ENCODE measurements at regions of chr2 and their contacts with region 1.

Region 1: DNA sequence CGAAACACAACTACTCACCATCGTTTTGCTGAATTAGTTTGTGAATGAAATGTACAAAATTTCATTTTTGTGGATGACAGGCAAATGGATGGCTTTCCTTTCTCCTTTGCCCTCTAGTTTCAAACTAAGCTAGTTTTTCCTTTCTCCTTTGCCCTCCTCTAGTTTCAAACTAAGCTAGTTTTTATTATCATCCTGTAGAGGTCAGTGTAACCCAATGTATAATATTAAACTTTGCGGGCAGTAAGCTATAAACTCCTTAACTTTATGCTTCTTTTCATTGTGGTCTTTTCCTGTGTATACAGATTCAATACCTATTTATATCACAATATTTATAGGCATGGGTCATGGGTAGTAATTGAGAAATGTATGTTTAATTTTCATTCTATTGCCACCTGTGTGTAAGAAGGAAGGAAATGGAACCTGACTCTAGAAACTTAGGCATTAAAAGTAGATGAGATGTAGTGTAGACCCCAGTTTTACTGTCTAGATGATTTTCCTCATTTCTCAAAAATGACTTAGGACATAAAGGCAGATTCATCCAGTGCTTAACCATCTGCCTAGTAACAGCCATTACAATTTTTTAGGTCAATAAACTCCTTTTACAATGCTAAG is 58.1 kb downstream of the MAP3K19 start:
- DNase-seq: peak in 3 of 14 experiments; percentile 31 to 44 (median 41)
- ATAC-seq: no peak
- H3K4me3 ChIP-seq: no peak overlapping the region
- H3K4me3 Mint-ChIP-seq: no peak overlapping the region
- H3K27ac ChIP-seq: no peak overlapping the region
- H3K27ac Mint-ChIP-seq: no peak overlapping the region
- H3K4me1 ChIP-seq: no peaks in the 10 kb centered on the region
- H3K4me1 Mint-ChIP-seq: no peaks in the 10 kb centered on the region
- H3K27me3 ChIP-seq: no peaks in the 10 kb centered on the region
- H3K27me3 Mint-ChIP-seq: peaks cover 6% of the 10 kb centered on the region
- CTCF ChIP-seq: peak; percentile 46

Region 2: DNA sequence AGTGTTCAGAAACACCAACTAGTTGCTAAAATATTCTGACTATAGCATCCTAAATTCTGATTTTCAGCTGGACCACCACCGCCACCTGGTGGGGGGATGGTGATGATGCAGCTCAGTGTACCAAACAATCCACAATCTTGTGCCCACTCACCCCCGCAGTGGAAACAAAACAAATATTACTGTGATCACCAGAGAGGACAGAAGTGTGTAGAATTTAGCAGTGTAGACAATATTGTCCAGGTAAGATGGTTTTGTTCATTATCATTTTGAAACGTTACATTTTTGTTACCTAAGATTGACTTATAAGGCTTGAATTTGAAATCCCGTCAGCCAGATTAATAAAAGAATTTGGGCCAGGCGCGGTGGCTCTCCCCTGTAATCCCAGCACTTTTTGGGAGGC is 720.9 kb after region 1 on chr2:
- CTCF ChIA-PET with region 1: interaction called, 17 read pairs
- POLR2A ChIA-PET with region 1: interaction called, 4 read pairs
- intact Hi-C with region 1: loop called (anchors 1 to 5 kb)
- DNase-seq: peak; percentile 46 to 82 (median 68)
- ATAC-seq: peak; percentile 87
- H3K4me3 ChIP-seq: no peak overlapping the region
- H3K4me3 Mint-ChIP-seq: no peak overlapping the region
- H3K27ac ChIP-seq: no peak overlapping the region
- H3K27ac Mint-ChIP-seq: no peak overlapping the region
- H3K4me1 ChIP-seq: no peaks in the 10 kb centered on the region
- H3K4me1 Mint-ChIP-seq: no peaks in the 10 kb centered on the region
- H3K27me3 ChIP-seq: no peaks in the 10 kb centered on the region
- H3K27me3 Mint-ChIP-seq: no peaks in the 10 kb centered on the region
- CTCF ChIP-seq: peak; percentile 99

Region 3: DNA sequence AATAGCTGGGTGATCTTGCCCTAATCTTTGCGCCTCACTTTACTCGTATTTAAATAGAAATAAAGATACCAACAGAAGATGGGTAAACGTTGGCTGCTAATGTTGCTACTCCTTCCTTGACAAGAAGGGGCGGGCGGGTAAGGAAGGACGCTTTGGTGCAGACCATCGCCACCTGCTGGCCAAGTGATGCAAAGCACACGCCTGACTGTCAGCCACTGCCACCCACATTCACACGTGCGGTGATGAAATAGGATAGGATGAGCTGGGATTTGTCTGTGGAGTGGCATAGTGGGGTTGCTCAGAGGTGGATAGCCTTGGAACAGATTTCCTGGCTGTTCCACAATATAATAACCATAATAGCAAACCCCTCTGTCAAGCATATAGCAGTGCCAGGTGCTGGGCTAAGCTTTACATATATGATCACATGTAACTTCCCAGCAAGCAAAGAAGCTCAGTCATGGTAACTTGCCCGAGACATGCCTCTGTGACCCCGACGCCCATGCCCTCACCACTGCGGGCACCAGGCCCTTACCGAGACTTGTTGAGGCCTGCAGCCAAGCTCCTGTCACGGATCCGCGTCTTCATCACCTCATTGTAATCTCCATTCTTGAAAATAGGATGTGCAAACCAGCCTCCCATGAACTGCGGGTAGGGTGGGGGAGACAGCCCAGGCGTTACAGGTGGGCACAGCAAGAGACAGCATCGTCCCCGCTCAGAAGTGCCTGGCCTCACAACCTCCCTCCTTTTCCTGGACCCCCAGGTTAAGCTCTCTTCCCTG is 808.6 kb after region 1 on chr2:
- CTCF ChIA-PET with region 1: interaction called, 5 read pairs
- POLR2A ChIA-PET with region 1: no interaction called
- intact Hi-C with region 1: loop called (anchors 1 to 2 kb)
- DNase-seq: peak; percentile 64 to 88 (median 70)
- ATAC-seq: peak; percentile 88
- H3K4me3 ChIP-seq: no peak overlapping the region
- H3K4me3 Mint-ChIP-seq: no peak overlapping the region
- H3K27ac ChIP-seq: no peak overlapping the region
- H3K27ac Mint-ChIP-seq: no peak overlapping the region
- H3K4me1 ChIP-seq: peaks cover 12% of the 10 kb centered on the region
- H3K4me1 Mint-ChIP-seq: peaks cover 12% of the 10 kb centered on the region
- H3K27me3 ChIP-seq: no peaks in the 10 kb centered on the region
- H3K27me3 Mint-ChIP-seq: no peaks in the 10 kb centered on the region
- CTCF ChIP-seq: peak; percentile 97